PC-3 (cell line): ENCODE measurements at regions of chr1 and their contacts with region 1.

Region 1: DNA sequence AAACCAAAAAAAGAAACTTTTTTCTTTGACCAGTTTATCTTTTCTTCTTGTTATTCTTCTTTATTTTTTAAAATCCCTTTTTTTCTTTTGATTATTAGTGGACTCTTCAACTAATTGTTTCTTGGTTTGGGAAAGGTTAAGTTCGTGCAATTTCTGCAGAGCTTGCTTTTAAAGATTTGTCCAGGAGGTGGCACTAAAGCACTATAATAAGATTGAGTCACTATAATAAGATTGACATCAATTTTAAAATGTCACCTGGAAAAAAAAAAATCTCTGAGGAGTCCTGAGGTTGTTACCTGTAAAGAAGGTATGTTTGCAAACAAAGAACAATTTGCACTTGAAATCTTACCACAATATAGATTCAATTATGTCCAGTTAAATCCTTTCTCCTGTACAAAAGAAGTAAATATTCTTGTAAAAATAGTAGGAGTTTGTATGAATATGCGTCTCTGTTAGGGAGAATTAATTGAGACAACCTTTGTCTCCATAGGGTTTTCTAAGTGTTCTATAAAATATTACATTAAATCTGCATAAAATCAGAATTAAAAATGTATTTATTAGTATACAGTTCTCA is 166.7 kb downstream of the ADGRL4 start:
- DNase-seq: peak; percentile 85
- ATAC-seq: 0 out of 2 replicates have a peak, but pooled peaks have one; percentile 12
- H3K4me3 ChIP-seq: no peak overlapping the region
- H3K27ac ChIP-seq: no peak overlapping the region
- H3K4me1 ChIP-seq: peaks cover 14% of the 10 kb centered on the region
- H3K27me3 ChIP-seq: no peaks in the 10 kb centered on the region
- CTCF ChIP-seq: peak; percentile 79

Region 2: GRCh38 chr1:78688701-78689100 is 151.1 kb before region 1 on chr1:
- CTCF ChIA-PET with region 1: interaction called, 9 read pairs
- POLR2A ChIA-PET with region 1: no interaction called
- intact Hi-C with region 1: loop called (anchors 1 kb)
- DNase-seq: peak; percentile 66
- ATAC-seq: peak; percentile 41
- H3K4me3 ChIP-seq: no peak overlapping the region
- H3K27ac ChIP-seq: peak overlapping the region; percentile 55
- H3K4me1 ChIP-seq: peaks cover 57% of the 10 kb centered on the region
- H3K27me3 ChIP-seq: no peaks in the 10 kb centered on the region
- CTCF ChIP-seq: peak; percentile 74

Region 3: DNA sequence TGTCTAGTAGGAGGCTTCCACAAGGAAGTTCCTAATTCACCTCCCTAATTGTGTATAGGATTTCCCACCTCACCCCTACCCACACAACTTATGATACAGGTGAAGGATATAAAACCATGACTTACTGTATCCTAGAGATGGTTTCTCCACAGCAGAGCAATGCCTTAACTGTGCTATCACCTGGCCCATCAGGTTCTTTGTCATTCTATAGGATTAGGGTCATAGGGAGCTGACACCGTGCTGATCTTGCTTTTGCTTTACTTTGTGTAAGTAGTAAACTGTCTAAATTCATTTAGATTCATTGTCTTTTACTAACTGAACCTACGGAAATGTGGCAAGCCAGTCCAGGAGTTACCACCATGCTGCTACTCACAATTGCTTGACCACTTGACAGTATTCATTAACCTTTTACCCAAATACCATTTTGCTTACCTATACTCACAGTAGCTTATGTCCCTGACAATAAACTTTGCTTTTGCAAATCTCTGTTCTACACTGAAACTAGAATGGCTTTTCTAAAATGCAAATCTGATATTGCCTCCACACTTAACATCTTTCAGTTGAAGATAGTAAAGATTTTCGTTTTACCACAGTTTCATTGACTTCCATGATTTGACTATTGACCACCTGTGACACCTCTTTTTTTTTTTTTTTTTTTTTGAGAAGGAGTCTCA is 42.5 kb before region 1 on chr1:
- CTCF ChIA-PET with region 1: no interaction called
- POLR2A ChIA-PET with region 1: no interaction called
- intact Hi-C with region 1: no loop called
- DNase-seq: no peak
- ATAC-seq: no peak
- H3K4me3 ChIP-seq: no peak overlapping the region
- H3K27ac ChIP-seq: no peak overlapping the region
- H3K4me1 ChIP-seq: no peaks in the 10 kb centered on the region
- H3K27me3 ChIP-seq: no peaks in the 10 kb centered on the region
- CTCF ChIP-seq: no peak

Region 4: GRCh38 chr1:79079770-79080169 is 240.0 kb after region 1 on chr1:
- CTCF ChIA-PET with region 1: no interaction called
- POLR2A ChIA-PET with region 1: no interaction called
- intact Hi-C with region 1: loop called (anchors 5 kb)
- DNase-seq: peak; percentile 90
- ATAC-seq: peak; percentile 91
- H3K4me3 ChIP-seq: no peak overlapping the region
- H3K27ac ChIP-seq: peak overlapping the region; percentile 21
- H3K4me1 ChIP-seq: peaks cover 16% of the 10 kb centered on the region
- H3K27me3 ChIP-seq: no peaks in the 10 kb centered on the region
- CTCF ChIP-seq: no peak

Region 5: GRCh38 chr1:79128722-79129121 is 288.9 kb after region 1 on chr1:
- CTCF ChIA-PET with region 1: no interaction called
- POLR2A ChIA-PET with region 1: no interaction called
- intact Hi-C with region 1: loop called (anchors 5 kb)
- DNase-seq: peak; percentile 83
- ATAC-seq: peak; percentile 99
- H3K4me3 ChIP-seq: no peak overlapping the region
- H3K27ac ChIP-seq: peak overlapping the region; percentile 58
- H3K4me1 ChIP-seq: peaks cover 16% of the 10 kb centered on the region
- H3K27me3 ChIP-seq: no peaks in the 10 kb centered on the region
- CTCF ChIP-seq: no peak

Region 6: DNA sequence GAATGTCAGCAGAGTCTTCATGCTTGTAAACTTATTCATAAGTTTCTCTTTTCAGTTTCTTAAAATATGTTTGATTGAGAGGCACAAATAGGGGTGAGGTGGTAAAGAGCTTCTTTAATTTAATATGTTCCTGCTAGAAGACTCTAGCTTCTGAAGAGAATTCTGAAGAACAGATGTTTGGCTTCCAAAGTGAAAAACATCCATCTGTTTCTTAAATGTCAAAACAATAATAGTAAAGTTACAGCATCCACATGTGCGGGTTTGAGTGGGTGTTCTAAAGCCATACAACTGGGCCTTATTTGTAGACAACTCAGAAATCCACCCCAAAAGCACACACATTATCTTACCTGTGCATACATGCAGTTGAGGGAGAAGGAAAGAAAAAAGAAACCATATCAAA is 310.8 kb after region 1 on chr1:
- CTCF ChIA-PET with region 1: interaction called, 3 read pairs
- POLR2A ChIA-PET with region 1: no interaction called
- intact Hi-C with region 1: loop called (anchors 5 kb)
- DNase-seq: no peak
- ATAC-seq: no peak
- H3K4me3 ChIP-seq: no peak overlapping the region
- H3K27ac ChIP-seq: no peak overlapping the region
- H3K4me1 ChIP-seq: peaks cover 18% of the 10 kb centered on the region
- H3K27me3 ChIP-seq: no peaks in the 10 kb centered on the region
- CTCF ChIP-seq: no peak

Region 7: DNA sequence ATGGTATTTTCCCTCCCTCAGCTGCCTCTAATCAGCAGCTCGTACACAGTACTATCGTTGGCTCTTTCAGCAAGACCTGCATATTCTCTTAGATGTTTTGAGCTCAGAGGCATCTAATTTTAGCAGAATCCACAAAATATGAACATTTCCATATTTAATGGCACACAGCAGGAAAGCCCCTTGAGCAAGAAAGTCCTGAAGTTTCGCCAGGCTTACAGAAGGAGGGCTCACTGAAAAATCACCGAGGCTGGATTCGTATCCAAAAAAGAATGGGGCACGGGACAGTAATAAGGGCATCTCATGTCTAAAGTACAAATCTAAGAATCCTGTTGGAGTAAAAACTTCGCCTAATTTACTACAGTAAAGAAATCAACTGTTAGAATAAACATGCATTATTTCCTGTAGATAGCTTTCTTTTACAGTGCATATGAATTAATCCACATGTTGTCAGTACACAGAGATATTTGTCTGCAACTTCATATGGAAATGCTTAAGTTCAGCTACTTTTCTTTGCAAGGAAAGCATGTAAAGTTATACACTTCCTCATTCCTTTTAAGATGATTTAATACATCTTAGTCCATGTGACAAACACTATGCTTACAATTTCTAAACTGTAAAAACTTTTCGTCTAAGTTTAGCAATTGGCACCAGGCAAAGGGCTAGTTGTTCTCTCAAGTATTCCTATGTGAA is 1372.0 kb after region 1 on chr1:
- CTCF ChIA-PET with region 1: interaction called, 6 read pairs
- POLR2A ChIA-PET with region 1: no interaction called
- intact Hi-C with region 1: loop called (anchors 5 kb)
- DNase-seq: no peak
- ATAC-seq: no peak
- H3K4me3 ChIP-seq: no peak overlapping the region
- H3K27ac ChIP-seq: no peak overlapping the region
- H3K4me1 ChIP-seq: no peaks in the 10 kb centered on the region
- H3K27me3 ChIP-seq: no peaks in the 10 kb centered on the region
- CTCF ChIP-seq: no peak